ENCODE measurements at regions of chr1 and their contacts with region 1.

Region 1: GRCh38 chr1:15100121-15100874 is 53.2 kb upstream of the TMEM51 start:
- DNase-seq: peak; percentile 86
- H3K4me3 Mint-ChIP-seq: no peak overlapping the region
- H3K27ac Mint-ChIP-seq: no peak overlapping the region
- H3K4me1 Mint-ChIP-seq: peaks cover 5% of the 10 kb centered on the region
- H3K27me3 Mint-ChIP-seq: peaks cover 23% of the 10 kb centered on the region

Region 2: DNA sequence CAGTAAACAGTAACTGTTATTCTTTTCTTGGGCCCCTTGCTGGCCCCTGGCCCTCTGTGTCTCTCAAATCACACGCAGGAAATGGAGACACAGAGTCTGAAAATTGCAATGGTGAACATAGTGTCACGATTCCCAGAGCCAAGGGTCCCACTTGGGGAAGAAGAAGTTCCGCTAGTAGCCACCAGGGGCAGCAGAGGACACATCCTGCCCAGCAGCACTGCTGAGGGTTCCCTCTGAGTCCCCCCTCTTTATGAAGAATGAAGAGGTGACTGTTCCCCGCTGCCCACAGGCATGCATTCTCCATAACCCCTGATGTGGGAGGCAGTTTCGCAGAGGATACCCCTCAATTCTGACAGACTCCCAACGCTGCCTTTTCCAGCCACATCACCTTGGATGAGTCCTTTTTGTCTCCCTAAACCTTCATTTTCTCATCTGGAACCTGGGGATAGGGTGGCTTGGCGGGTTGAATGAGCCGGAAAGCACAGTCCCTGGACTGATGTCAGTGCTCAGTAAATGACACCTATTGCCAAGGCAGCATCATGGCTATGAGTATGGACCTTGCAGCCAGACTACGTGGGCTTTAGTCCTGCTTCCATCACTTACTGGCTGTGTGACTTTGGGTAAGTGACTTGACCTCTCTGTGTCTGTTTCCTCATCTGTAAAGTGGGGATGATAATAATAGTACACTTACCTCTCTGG is 184.8 kb before region 1 on chr1:
- intact Hi-C with region 1: loop called (anchors 10 kb)
- DNase-seq: peak; percentile 81
- H3K4me3 Mint-ChIP-seq: no peak overlapping the region
- H3K27ac Mint-ChIP-seq: no peak overlapping the region
- H3K4me1 Mint-ChIP-seq: no peaks in the 10 kb centered on the region
- H3K27me3 Mint-ChIP-seq: no peaks in the 10 kb centered on the region